Aorta (tissue), 5 donors: ENCODE measurements at regions of chr6 and their contacts with region 1.

Region 1: GRCh38 chr6:43263314-43264178 is 20.3 kb downstream of the TTBK1 start:
- DNase-seq: peak; percentile 85 to 88
- ATAC-seq: peak; percentile 78
- H3K4me3 ChIP-seq: no peak overlapping the region
- H3K27ac ChIP-seq: no peak overlapping the region
- H3K4me1 ChIP-seq: no peaks in the 10 kb centered on the region
- H3K27me3 ChIP-seq: no peaks in the 10 kb centered on the region

Region 2: DNA sequence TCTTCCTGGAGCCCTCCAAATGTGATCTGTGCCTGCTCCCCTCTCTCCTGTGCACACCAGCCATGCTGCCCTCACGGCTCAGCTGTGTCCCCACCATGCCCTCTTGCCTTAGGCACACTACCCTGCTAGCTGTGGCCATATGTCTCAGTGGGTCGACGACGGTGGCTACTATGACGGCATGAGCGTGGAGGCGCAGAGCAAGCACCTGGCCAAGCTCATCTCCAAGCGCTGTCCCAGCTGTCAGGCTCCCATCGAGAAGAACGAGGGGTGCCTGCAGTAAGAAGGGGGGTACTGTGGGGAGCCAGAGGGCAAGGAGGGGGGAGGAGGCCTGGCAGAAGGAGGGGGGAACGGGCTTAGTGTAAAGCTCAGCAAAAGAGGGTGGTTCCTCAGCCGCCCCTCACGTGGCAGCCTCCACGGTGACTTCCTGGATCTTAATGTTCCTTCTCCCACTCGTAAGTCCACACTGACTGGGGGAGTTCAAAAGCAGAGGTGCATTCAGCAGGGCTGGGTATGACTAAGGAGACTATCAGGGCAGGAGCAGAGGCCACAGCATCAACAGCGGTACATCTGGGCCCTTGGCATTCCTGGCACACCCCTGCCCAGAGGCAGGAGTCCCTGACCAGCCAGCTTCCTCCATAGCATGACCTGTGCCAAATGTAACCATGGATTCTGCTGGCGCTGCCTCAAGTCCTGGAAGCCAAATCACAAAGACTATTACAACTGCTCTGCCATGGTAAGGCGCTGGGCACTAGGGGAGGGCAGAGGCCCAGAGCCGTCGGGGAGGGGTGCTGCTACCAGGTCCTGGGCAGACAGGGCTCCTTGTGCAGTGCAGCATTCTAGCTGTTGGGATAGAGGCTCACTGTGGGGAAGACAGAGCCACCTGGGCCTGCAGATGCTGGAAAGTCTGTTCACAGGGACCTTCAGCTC is 42.2 kb before region 1 on chr6:
- intact Hi-C with region 1: no loop called
- DNase-seq: peak in 1 of 2 donors; percentile 64
- ATAC-seq: no peak
- H3K4me3 ChIP-seq: no peak overlapping the region
- H3K27ac ChIP-seq: no peak overlapping the region
- H3K4me1 ChIP-seq: no peaks in the 10 kb centered on the region
- H3K27me3 ChIP-seq: no peaks in the 10 kb centered on the region

Region 3: GRCh38 chr6:43334466-43335095 is 71.0 kb after region 1 on chr6:
- intact Hi-C with region 1: loop called in 1 of 2 experiments (anchors 5 kb)
- DNase-seq: no peak
- ATAC-seq: no peak
- H3K4me3 ChIP-seq: no peak overlapping the region
- H3K27ac ChIP-seq: no peak overlapping the region
- H3K4me1 ChIP-seq: no peaks in the 10 kb centered on the region
- H3K27me3 ChIP-seq: no peaks in the 10 kb centered on the region